ENCODE measurements at regions of chr3 and their contacts with region 1.

Region 1: DNA sequence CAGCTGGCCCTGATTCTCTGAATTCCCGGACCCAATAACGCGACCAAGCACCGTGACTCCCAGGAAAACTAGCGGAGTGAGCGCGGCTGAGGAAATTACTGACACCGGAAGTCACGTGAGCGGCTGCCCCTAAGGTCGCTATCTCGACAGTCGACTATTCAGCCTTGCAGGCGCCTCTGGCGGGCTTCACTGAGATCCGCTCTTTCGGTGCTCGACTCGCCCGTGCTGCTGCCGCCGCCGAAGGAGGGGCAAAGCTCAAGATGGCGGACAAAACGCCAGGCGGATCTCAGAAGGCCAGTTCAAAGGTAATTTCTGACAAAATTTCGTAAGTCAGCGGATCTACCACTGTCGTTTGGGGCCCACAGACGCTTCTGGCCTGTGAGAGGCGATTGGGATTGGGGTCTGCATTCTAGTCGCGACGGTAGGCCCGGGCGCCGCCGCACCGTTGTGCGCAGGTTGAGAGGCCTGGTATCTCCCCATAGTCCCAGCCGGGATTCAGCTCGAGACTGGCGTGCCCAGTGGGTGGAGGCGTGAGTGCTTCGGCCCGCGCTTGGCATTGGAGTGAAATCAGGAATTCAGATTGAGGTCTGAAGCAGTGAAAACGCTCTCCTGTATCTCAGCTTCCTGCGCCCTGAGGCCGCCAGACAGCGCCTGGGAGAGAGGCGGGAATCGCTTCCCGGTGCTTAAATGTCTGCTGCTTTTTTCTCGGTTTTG is at the start of gene U2SURP:
- DNase-seq: peak; percentile 96 to 98 (median 97)
- ATAC-seq: peak; percentile 90 to 96 (median 96)
- H3K4me3 ChIP-seq: peak within 1 kb of the TSS; percentile 74 to 97 (median 88)
- H3K27ac ChIP-seq: peak within 1 kb of the TSS; percentile 67 to 95 (median 90)
- H3K4me1 ChIP-seq: peaks cover 6 to 55% (median 43%) of the 10 kb centered on the region in 12 donors
- H3K27me3 ChIP-seq: no peaks in the 10 kb centered on the region
- CTCF ChIP-seq: peak in 2 of 12 donors; percentile 8
- POLR2A ChIP-seq: peak in 1 of 2 donors; percentile 78
- total RNA-seq, gene U2SURP: 25.8 to 42.0 (median 33.5) TPM

Region 2: DNA sequence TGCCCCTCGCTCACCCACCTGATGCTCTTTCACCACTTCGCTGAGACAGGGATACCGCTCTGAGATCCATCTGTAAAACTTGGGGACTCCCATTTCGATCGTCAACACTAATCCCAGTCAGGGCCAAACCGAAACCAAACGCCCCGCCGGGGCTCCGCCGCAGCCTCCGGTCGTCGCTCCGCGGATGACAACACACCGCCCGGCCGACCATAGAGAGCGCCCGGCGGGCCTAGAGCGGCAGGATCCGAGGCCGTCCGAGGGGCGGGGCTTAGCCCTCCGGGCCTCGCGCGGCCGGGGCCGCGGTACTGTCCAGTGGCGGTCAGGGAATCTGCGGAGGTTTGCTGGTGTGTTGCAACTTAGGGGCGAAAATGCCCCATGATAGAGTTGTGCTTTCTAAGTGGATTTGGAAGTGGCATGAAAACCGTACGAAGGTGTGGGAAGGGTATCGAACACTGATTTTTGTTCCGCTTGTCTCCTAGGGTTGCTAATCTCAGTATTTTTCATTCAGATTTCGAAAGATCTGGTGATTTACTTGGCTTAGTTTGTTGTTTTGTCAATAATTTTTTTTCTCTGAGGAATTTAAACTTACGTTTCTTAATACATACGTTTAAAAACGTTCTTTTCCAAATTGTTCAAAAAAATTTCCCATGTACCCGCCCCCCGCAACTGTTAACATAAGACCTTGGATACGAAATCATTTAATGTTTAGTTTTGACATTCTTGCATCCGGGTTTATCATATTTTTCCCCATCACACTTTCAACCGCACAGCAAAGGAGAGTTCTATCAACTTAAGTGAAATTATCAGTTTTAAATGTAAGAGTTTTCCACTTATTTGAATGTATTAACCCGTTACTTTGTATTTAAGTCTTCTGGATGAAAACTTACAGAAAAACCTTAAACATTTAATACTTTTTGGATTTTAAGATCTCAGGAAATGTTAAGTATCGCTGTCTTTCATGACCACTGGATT is 553.4 kb before region 1 on chr3 and contains the start of gene XRN1:
- intact Hi-C with region 1: loop called in 1 of 10 experiments (anchors 10 kb)
- DNase-seq: peak; percentile 95 to 98 (median 97)
- ATAC-seq: peak; percentile 99 to 100 (median 100)
- H3K4me3 ChIP-seq: peak within 1 kb of the TSS; percentile 53 to 98 (median 82)
- H3K27ac ChIP-seq: peak within 1 kb of the TSS; percentile 80 to 98 (median 94)
- H3K4me1 ChIP-seq: peaks cover 0 to 41% (median 31%) of the 10 kb centered on the region in 12 donors
- H3K27me3 ChIP-seq: no peaks in the 10 kb centered on the region
- CTCF ChIP-seq: peak in 1 of 12 donors; percentile 8
- POLR2A ChIP-seq: peak in 1 of 2 donors; percentile 68
- total RNA-seq, gene XRN1: 15.2 to 35.5 (median 27.5) TPM

Region 3: GRCh38 chr3:142578327-142579223 is 423.0 kb before region 1 on chr3 and contains the start of gene ATR:
- intact Hi-C with region 1: loop called in 3 of 10 experiments (anchors 2 to 5 kb)
- DNase-seq: peak; percentile 97 to 98 (median 98)
- ATAC-seq: peak; percentile 99
- H3K4me3 ChIP-seq: peak within 1 kb of the TSS; percentile 53 to 97 (median 88)
- H3K27ac ChIP-seq: peak within 1 kb of the TSS; percentile 72 to 97 (median 91)
- H3K4me1 ChIP-seq: peaks cover 0 to 50% (median 24%) of the 10 kb centered on the region in 12 donors
- H3K27me3 ChIP-seq: no peaks in the 10 kb centered on the region
- CTCF ChIP-seq: peak in 3 of 12 donors; percentile 8 to 18 (median 16)
- POLR2A ChIP-seq: no peak
- total RNA-seq, gene ATR: 10.3 to 17.0 (median 11.1) TPM

Region 4: GRCh38 chr3:142723968-142724681 is 277.4 kb before region 1 on chr3 and contains the start of gene TRPC1:
- intact Hi-C with region 1: loop called in 3 of 10 experiments (anchors 10 kb)
- DNase-seq: peak; percentile 77 to 84 (median 83)
- ATAC-seq: peak; percentile 80 to 96 (median 94)
- H3K4me3 ChIP-seq: peak within 1 kb of the TSS; percentile 72 to 96 (median 80)
- H3K27ac ChIP-seq: peak within 1 kb of the TSS; percentile 82 to 99 (median 91)
- H3K4me1 ChIP-seq: peaks cover 0 to 21% (median 6%) of the 10 kb centered on the region in 12 donors
- H3K27me3 ChIP-seq: peaks cover 0 to 14% (median 0%) of the 10 kb centered on the region in 9 donors
- CTCF ChIP-seq: no peak
- POLR2A ChIP-seq: peak; percentile 86 to 92
- total RNA-seq, gene TRPC1: 5.9 to 14.2 (median 11.2) TPM

Region 5: GRCh38 chr3:142735462-142735861 is 266.1 kb before region 1 on chr3:
- intact Hi-C with region 1: loop called in 2 of 10 experiments (anchors 10 kb)
- DNase-seq: peak in 1 of 5 donors; percentile 30
- ATAC-seq: peak; percentile 88 to 95 (median 90)
- H3K4me3 ChIP-seq: peak overlapping the region in 2 of 12 donors; percentile 3 to 28
- H3K27ac ChIP-seq: peak overlapping the region in 10 of 12 donors; percentile 29 to 76 (median 56)
- H3K4me1 ChIP-seq: peaks cover 0 to 24% (median 6%) of the 10 kb centered on the region in 12 donors
- H3K27me3 ChIP-seq: no peaks in the 10 kb centered on the region
- CTCF ChIP-seq: no peak
- POLR2A ChIP-seq: no peak

Region 6: DNA sequence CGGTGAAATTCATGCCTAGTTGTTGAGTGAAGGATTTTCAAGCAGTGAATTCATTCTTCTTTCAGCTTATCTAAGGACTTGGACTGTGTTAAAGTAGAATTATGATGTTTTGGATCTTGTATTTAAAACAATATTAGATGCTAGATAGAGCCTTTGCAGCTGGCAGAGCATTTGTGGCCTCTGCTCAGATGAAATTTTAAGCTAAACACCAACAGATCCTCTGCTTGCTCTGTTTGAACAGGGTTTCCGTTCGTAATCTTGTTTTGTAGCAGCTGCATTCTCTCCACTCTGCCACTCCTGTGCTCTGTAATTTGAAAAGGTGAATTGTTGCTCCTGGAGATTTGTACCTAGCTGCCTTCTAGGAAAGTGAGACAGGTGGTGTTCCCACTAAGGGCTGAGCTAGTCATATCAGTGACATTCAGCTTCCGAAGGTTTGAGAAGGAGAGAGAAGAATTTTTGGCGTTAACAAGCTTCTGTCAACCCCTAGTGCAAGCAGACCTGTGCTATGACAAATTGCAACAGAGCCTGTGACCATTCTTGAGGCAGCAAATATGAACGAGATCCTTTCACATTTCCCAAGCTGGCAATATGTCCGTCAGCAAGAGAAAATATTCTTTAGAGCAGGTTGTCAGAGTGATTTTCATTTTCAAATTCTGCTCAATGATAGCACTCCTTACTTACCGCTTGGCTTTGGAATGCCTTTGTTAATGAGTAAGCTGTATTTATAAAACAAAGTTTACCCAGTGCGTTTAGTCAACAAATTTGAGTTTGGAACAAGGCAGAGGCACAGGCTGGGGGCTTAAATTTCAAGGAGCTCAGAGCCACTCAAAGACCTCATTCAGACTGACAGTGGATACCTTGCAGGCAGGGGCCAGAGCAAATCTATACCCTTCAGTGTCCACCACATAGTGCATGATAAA is 123.3 kb after region 1 on chr3:
- intact Hi-C with region 1: no loop called
- DNase-seq: no peak
- ATAC-seq: no peak
- H3K4me3 ChIP-seq: peak overlapping the region in 3 of 12 donors; percentile 3 to 21 (median 6)
- H3K27ac ChIP-seq: peak overlapping the region in 2 of 12 donors; percentile 13 to 33
- H3K4me1 ChIP-seq: peaks cover 0 to 39% (median 2%) of the 10 kb centered on the region in 12 donors
- H3K27me3 ChIP-seq: peaks cover 0 to 27% (median 9%) of the 10 kb centered on the region in 9 donors
- CTCF ChIP-seq: no peak
- POLR2A ChIP-seq: no peak

Region 7: GRCh38 chr3:143135150-143135549 is 133.6 kb after region 1 on chr3:
- intact Hi-C with region 1: no loop called
- DNase-seq: no peak
- ATAC-seq: peak in 3 of 4 donors; percentile 48 to 65 (median 54)
- H3K4me3 ChIP-seq: no peak overlapping the region
- H3K27ac ChIP-seq: peak overlapping the region in 1 of 12 donors; percentile 12
- H3K4me1 ChIP-seq: peaks cover 0 to 20% (median 4%) of the 10 kb centered on the region in 12 donors
- H3K27me3 ChIP-seq: no peaks in the 10 kb centered on the region
- CTCF ChIP-seq: no peak
- POLR2A ChIP-seq: no peak

Measured in heart left ventricle (tissue), 16 donors.